ENCODE measurements at regions of chr17 and their contacts with region 1.

Region 1: GRCh38 chr17:44533533-44534246 is 23.6 kb upstream of the FZD2 start:
- DNase-seq: peak; percentile 92 to 93 (median 92)
- ATAC-seq: peak; percentile 97
- H3K4me3 ChIP-seq: no peak overlapping the region
- H3K27ac ChIP-seq: no peak overlapping the region
- H3K4me1 ChIP-seq: peaks cover 7 to 11% of the 10 kb centered on the region in 2 experiments; a peak in 2 of 5 replicates
- H3K27me3 ChIP-seq: peaks cover 0 to 5% of the 10 kb centered on the region in 2 experiments; a peak in 1 of 5 replicates
- CTCF ChIP-seq: peak; percentile 93 to 96 (median 96)
- EP300 ChIP-seq: no peak
- POLR2A ChIP-seq: no peak
- RAD21 ChIP-seq: peak; percentile 94 to 97

Region 2: DNA sequence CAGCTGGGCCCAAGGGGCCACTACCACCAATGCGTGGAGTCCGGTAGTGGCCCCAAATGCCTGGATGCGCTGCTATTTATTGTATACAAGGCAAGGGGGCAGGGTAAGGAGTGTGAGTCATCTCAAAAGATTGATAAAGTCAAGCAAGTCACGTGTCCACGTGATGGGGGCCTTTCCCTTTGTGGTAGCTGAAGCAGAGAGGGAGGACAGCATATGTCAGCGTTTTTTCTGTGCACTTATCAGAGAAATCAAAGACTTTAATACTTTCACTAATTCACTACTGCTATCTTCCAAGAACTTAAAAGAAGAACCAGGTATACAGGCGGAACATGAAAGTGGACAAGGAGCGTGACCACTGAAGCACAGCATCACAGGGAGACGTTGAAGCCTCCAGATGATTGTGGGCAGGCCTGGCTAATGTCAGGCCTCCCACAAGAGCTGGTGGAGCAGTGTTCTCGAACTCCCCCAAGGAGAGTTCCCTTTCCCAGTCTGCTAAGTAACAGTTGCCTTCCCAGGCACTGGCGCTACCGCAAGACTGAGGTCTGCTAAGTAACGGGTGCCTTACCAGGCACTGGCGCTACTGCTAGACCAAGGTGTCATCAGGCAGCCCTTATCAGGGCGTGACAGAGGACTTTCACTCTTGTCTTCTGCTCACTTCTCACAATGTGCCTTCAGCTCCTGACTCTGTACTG is 374.0 kb before region 1 on chr17:
- CTCF ChIA-PET with region 1: no interaction called
- POLR2A ChIA-PET with region 1: no interaction called
- in situ Hi-C with region 1: no loop called
- intact Hi-C with region 1: no loop called
- DNase-seq: peak; percentile 45 to 90 (median 52)
- ATAC-seq: peak; percentile 96
- H3K4me3 ChIP-seq: no peak overlapping the region
- H3K27ac ChIP-seq: peak overlapping the region; percentile 79
- H3K4me1 ChIP-seq: peaks cover 20 to 24% of the 10 kb centered on the region in 2 experiments
- H3K27me3 ChIP-seq: no peaks in the 10 kb centered on the region
- CTCF ChIP-seq: no peak
- EP300 ChIP-seq: peak; percentile 35; the same call in 1 of the 2 replicates
- POLR2A ChIP-seq: no peak
- RAD21 ChIP-seq: no peak

Region 3: DNA sequence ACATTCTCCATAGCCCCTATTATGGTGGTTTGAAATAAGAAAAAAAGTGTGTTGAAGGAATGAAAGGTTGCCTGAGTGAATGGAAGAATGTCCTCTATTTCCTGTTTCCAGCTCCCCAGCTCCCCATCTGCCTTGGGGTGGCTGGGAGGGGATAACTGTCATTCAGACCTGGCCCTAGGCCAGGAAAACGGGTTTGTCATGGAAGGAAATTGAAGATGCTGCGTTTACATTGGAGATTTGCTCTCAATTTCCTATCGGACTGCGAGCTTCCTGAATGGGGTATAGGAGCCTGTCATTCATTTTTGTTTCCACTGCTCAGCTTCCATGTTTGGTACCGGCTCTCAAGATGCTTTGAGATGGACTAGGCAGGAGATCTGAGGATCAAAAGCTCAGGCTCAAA is 21.4 kb after region 1 on chr17:
- CTCF ChIA-PET with region 1: no interaction called
- POLR2A ChIA-PET with region 1: no interaction called
- in situ Hi-C with region 1: no loop called
- intact Hi-C with region 1: no loop called
- DNase-seq: peak in 1 of 4 experiments; percentile 37
- ATAC-seq: no peak
- H3K4me3 ChIP-seq: no peak overlapping the region
- H3K27ac ChIP-seq: no peak overlapping the region
- H3K4me1 ChIP-seq: peaks cover 10 to 25% of the 10 kb centered on the region in 2 experiments; a peak in 4 of 5 replicates
- H3K27me3 ChIP-seq: no peaks in the 10 kb centered on the region
- CTCF ChIP-seq: no peak
- EP300 ChIP-seq: no peak
- POLR2A ChIP-seq: no peak
- RAD21 ChIP-seq: no peak

Region 4: GRCh38 chr17:44636562-44636961 is 102.9 kb after region 1 on chr17:
- CTCF ChIA-PET with region 1: interaction called, 24 read pairs
- POLR2A ChIA-PET with region 1: no interaction called
- in situ Hi-C with region 1: no loop called
- intact Hi-C with region 1: loop called (anchors 1 kb)
- DNase-seq: no peak
- ATAC-seq: 0 out of 3 replicates have a peak, but pooled peaks have one; percentile 42
- H3K4me3 ChIP-seq: no peak overlapping the region
- H3K27ac ChIP-seq: no peak overlapping the region
- H3K4me1 ChIP-seq: no peaks in the 10 kb centered on the region
- H3K27me3 ChIP-seq: peaks cover 3 to 16% of the 10 kb centered on the region in 2 experiments; a peak in 3 of 5 replicates
- CTCF ChIP-seq: peak in 2 of 3 experiments; percentile 9 to 50; a peak in 2 of 6 replicates
- EP300 ChIP-seq: no peak
- POLR2A ChIP-seq: no peak
- RAD21 ChIP-seq: peak; percentile 61 to 72

Region 5: DNA sequence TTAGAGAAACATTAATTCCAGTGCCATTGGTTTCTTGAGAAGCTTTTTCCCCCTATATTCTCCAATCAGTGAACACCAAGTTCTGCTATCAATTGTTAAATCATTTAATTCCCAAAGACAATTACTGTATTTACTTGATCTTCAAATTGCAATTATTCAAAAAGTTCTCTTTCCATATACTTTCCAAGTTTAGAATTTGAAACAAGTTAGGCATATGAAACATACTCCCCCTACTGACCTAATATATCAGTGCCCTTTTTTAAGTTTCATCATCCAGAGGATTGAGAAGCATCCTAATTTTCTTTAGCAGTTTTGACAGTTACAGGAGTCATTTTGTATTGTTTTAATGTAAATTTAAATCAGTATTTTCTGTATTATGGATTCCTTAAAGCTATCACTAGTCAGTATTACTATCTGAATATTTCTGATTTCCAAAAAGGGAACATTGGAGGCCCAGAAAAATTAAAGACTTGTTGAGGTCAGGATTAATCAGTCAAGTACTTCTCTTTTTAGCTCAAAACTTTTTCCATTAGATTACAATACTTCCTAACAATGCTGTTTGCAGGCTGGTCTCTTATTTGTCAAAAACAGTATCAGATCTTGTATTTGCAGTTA is 138.9 kb after region 1 on chr17:
- CTCF ChIA-PET with region 1: interaction called, 18 read pairs
- POLR2A ChIA-PET with region 1: no interaction called
- in situ Hi-C with region 1: loop called (anchors 5 kb)
- intact Hi-C with region 1: loop called (anchors 1 kb)
- DNase-seq: peak; percentile 21 to 28 (median 24)
- ATAC-seq: peak; percentile 70; the same call in 2 of the 3 replicates
- H3K4me3 ChIP-seq: no peak overlapping the region
- H3K27ac ChIP-seq: no peak overlapping the region
- H3K4me1 ChIP-seq: no peaks in the 10 kb centered on the region
- H3K27me3 ChIP-seq: no peaks in the 10 kb centered on the region
- CTCF ChIP-seq: peak in 2 of 3 experiments; percentile 38 to 69; a peak in 3 of 6 replicates
- EP300 ChIP-seq: no peak
- POLR2A ChIP-seq: no peak
- RAD21 ChIP-seq: peak; percentile 42 to 62